ENCODE measurements at regions of chr1 and their contacts with region 1.

Region 1: DNA sequence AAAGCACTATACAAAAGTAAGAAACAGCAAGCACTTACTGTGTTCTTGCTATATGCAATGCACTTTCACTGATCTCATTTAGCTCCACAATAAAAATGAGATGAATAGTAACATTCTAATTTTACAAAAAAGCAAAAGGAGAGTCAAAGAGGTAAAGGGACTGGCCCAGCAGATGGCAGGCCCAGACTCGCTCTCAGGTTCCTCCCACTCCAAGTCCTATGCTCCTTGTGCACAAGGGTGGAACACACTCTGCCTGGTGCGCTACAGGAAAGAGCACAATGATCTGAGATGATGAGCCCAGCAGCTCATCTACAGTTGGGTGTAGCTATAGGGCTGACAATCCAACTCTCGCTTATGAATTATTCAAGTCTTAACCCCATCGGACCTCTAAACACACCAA is 94.1 kb upstream of the LYST start:
- DNase-seq: no peak
- H3K4me3 ChIP-seq: no peak overlapping the region
- H3K27ac ChIP-seq: no peak overlapping the region
- H3K4me1 ChIP-seq: no peaks in the 10 kb centered on the region
- H3K27me3 ChIP-seq: no peaks in the 10 kb centered on the region

Region 2: GRCh38 chr1:235791532-235792060 is 169.2 kb before region 1 on chr1:
- in situ Hi-C with region 1: no loop called
- DNase-seq: no peak
- H3K4me3 ChIP-seq: no peak overlapping the region
- H3K27ac ChIP-seq: no peak overlapping the region
- H3K4me1 ChIP-seq: peaks cover 8% of the 10 kb centered on the region
- H3K27me3 ChIP-seq: no peaks in the 10 kb centered on the region

Region 3: GRCh38 chr1:235809688-235810397 is 151.0 kb before region 1 on chr1:
- in situ Hi-C with region 1: loop called (anchors 10 kb)
- DNase-seq: no peak
- H3K4me3 ChIP-seq: no peak overlapping the region
- H3K27ac ChIP-seq: no peak overlapping the region
- H3K4me1 ChIP-seq: peaks cover 13% of the 10 kb centered on the region
- H3K27me3 ChIP-seq: no peaks in the 10 kb centered on the region

Region 4: DNA sequence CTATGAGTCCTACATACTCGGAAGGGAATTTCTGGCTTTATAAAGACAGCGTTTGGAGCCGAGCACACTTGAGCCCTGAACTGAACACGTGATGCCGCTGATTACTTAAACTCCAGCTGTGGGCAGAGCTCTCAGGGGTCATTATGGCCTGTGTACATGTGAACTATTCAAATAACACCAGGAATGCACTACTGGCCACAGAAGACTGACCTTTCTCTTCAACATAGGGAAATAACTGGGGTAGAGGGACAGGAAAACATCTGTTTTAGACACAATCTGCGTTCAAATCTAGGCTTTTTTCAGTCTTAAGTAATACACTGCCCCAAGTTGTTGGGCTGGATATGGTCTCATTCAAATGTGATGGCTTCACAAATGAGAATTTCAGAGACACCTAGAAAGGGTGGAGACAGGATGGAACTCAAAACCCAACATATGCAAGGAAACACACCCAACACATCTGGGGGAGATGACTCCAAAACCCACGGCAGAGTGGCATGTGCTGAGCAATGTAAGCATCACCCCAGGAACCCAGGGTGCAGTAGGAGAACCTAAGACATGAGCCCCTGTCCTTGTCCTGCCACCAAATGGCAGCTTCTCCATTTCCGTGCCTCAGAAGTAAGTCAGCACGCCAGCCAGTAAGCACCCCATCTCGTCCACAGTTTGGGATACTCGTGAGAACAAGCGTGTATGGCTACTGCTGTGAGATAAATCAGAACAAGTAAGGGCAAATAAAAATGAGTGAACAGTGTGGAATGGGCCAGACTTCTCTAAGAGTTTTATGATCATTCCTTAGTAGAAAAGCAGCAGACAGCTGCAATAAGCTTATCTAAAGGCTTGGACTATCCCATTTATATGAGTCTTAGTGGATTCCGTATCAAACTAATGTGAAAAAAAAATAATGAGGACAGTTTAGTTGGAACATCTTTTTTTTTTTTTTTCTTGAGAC is 79.2 kb after region 1 on chr1:
- in situ Hi-C with region 1: no loop called
- DNase-seq: no peak
- H3K4me3 ChIP-seq: no peak overlapping the region
- H3K27ac ChIP-seq: no peak overlapping the region
- H3K4me1 ChIP-seq: peaks cover 8% of the 10 kb centered on the region
- H3K27me3 ChIP-seq: no peaks in the 10 kb centered on the region